HCT116 (cell line): ENCODE measurements at regions of chr7 and their contacts with region 1.

Region 1: DNA sequence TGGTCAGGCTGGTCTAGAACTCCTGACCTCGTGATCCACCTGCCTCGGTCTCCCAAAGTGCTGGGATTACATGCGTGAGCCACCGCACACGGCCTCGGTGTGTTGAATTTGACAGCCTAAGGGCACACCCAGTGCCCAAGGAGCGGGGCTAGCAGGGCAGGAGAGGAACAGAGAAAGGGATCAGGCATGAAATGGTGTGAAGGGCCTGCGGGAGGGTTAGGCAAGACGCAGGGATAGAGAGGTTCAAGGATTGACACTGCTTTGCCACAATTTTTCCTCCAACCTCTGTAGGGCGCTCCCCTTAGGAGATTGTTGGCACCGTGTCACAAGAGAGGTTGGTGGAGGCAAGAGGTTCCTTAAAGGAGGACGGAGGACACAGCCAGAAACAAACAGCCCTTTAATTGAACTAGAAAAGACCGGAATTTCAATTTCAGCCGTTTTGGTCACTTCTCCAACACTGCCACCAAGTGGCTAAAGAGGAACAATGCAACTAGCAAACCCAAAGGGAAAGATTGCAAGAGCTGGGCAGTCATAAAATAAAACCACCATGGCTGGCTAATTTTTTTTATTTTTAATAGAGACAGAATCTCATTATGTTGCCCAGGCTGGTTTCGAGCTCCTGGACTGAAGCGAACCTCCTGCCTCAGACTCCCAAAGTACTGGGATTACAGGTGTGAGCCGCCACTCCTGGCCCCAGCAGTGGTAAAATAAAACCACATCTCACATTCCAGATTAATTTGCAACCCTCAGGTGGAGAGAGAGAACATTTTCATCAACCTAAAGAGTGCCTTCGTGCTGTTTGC is 6.9 kb upstream of the CREB3L2 start:
- DNase-seq: peak; percentile 56
- ATAC-seq: peak; percentile 78
- H3K4me3 ChIP-seq: no peak overlapping the region
- H3K27ac ChIP-seq: no peak overlapping the region
- H3K4me1 ChIP-seq: peaks cover 3% of the 10 kb centered on the region in 2 experiments; a peak in 1 of 4 replicates
- H3K27me3 ChIP-seq: no peaks in the 10 kb centered on the region
- CTCF ChIP-seq: peak; percentile 78 to 91 (median 80)
- POLR2A ChIP-seq: no peak
- RAD21 ChIP-seq: peak; percentile 96

Region 2: DNA sequence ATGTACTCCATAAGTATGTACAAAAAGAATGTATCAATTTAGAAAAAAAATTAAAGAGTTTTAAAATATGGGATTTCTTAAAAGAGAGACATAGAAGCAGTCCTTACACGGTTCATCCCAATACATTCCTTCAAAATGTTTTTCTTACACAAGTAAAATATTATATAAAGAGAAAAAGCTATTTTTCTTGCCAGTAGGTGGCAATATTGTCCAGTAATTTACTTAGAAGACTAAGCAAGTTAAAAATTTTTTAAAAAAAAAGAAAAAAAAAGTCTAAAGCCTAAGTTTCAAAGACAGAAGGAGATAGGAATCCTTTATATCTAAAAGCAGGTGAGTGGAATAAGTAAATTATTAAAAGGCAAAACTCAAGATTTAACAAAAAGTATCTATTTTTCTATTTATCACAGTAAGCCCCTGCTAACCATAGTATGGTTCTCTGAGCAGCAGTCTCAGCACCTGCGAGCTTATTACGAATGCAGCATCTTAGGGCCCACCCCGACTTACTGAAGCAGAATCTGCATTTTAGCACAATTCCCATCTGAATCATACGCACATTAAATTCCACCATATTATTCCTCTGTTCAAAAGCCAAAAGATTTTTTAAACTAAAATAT is 402.6 kb before region 1 on chr7:
- CTCF ChIA-PET with region 1: interaction called, 5 read pairs
- POLR2A ChIA-PET with region 1: no interaction called
- RAD21 ChIA-PET with region 1: no interaction called
- intact Hi-C with region 1: loop called (anchors 5 kb)
- DNase-seq: peak; percentile 35
- ATAC-seq: peak; percentile 47; the same call in 1 of the 2 replicates
- H3K4me3 ChIP-seq: no peak overlapping the region
- H3K27ac ChIP-seq: no peak overlapping the region
- H3K4me1 ChIP-seq: no peaks in the 10 kb centered on the region
- H3K27me3 ChIP-seq: peaks cover 32% of the 10 kb centered on the region
- CTCF ChIP-seq: peak; percentile 21 to 45 (median 38); a peak in 3 of 6 replicates
- POLR2A ChIP-seq: no peak
- RAD21 ChIP-seq: peak; percentile 52

Region 3: DNA sequence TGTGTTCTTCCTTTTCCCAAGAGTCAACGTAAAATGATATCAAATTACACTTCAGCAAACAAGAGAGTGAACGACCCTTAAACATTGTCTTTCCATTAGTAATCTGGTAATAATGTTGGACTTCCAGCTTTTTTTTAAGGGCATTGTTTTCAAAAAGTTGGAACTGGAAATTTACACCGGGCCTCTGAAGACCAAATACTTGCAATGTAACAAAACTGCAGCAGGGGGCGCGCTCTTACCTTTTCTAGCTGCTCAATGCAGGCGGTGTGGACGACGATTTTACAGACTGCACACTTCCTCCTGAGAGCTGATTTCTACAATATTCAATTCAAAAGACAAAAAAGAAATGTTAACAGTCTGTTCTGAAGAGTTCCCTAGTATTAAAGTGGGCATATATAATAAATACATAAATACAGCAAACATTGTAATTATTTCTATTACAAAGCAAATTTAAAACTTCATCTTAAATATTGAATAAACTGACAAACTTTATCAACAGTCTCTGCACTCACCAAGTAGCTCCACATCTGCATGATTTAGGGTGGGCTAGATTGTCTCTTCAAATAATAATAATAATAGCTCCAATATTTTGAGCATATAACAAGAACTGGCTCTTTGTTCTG is 352.4 kb before region 1 on chr7:
- CTCF ChIA-PET with region 1: interaction called, 7 read pairs
- POLR2A ChIA-PET with region 1: no interaction called
- RAD21 ChIA-PET with region 1: interaction called in 1 of 2 experiments, 3 read pairs
- intact Hi-C with region 1: loop called (anchors 2 kb)
- DNase-seq: peak; percentile 49
- ATAC-seq: peak; percentile 88
- H3K4me3 ChIP-seq: no peak overlapping the region
- H3K27ac ChIP-seq: no peak overlapping the region
- H3K4me1 ChIP-seq: no peaks in the 10 kb centered on the region
- H3K27me3 ChIP-seq: peaks cover 16% of the 10 kb centered on the region
- CTCF ChIP-seq: peak; percentile 74 to 85 (median 78); a peak in 5 of 6 replicates
- POLR2A ChIP-seq: no peak
- RAD21 ChIP-seq: peak; percentile 81

Region 4: DNA sequence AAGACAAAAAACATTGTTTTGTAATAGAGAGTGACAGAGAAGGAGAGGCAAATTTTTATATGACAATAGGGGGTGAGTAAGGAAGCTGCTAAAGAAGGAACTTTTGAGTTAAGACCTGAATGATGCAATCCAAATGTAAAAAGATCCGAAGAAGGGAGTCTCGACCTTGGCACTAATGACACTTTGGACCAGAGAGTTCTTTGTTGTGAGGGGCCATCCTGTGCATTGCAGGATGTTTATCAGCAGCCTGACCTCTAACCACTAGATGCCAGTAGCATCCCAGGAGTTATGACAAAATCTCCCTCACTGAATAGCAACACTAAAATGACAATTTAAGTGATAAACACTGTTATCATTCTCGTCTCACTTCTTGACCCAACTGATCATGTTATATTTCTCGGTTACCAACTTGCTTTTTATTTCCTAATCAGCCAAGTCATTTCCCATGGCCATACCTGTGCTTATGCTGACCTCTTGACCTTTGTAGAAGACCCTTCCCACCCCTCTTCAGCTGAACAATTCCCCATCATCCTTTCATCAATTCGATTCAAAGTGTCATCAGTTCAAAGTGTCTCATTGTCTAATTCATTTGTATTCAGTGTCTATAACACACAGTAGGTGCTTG is 191.9 kb before region 1 on chr7:
- CTCF ChIA-PET with region 1: no interaction called
- POLR2A ChIA-PET with region 1: no interaction called
- RAD21 ChIA-PET with region 1: no interaction called
- intact Hi-C with region 1: loop called (anchors 2 kb)
- DNase-seq: no peak
- ATAC-seq: no peak
- H3K4me3 ChIP-seq: no peak overlapping the region
- H3K27ac ChIP-seq: no peak overlapping the region
- H3K4me1 ChIP-seq: no peaks in the 10 kb centered on the region
- H3K27me3 ChIP-seq: peaks cover 3% of the 10 kb centered on the region; the same call in 1 of the 2 replicates
- CTCF ChIP-seq: peak in 2 of 3 experiments; percentile 12 to 17; a peak in 2 of 6 replicates
- POLR2A ChIP-seq: no peak
- RAD21 ChIP-seq: peak; percentile 59